ENCODE measurements at regions of chr1 and their contacts with region 1.

Region 1: DNA sequence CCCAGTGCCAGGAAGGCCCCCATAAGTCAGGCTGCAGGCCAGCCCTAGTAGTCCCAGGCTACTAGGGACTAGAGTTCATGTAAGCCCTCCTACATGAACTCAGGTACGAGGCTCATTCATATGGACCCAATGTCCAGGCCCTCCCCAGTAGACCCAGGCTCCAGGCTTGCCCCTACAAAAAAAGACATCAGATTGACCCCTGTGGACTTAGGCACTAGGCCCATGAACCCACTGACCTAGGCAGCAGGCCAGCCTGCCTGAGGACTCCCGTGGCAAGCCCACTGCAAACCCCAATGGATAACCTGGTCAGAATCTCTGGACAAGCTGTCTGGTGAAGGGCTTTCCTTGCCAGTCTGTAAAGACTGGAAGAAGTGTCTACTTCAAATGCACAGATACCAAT is 51.2 kb downstream of the TNNI3K start:
- DNase-seq: no peak
- H3K4me3 ChIP-seq: no peak overlapping the region
- H3K27ac ChIP-seq: no peak overlapping the region
- H3K4me1 ChIP-seq: no peaks in the 10 kb centered on the region
- H3K27me3 ChIP-seq: no peaks in the 10 kb centered on the region
- CTCF ChIP-seq: no peak
- EP300 ChIP-seq: no peak
- POLR2A ChIP-seq: no peak

Region 2: GRCh38 chr1:74222709-74223108 is 63.7 kb before region 1 on chr1:
- intact Hi-C with region 1: no loop called
- DNase-seq: no peak
- H3K4me3 ChIP-seq: no peak overlapping the region
- H3K27ac ChIP-seq: no peak overlapping the region
- H3K4me1 ChIP-seq: no peaks in the 10 kb centered on the region
- H3K27me3 ChIP-seq: no peaks in the 10 kb centered on the region
- CTCF ChIP-seq: no peak
- EP300 ChIP-seq: no peak
- POLR2A ChIP-seq: no peak

Region 3: GRCh38 chr1:74323937-74324473 is 37.6 kb after region 1 on chr1:
- intact Hi-C with region 1: no loop called
- DNase-seq: no peak
- H3K4me3 ChIP-seq: no peak overlapping the region
- H3K27ac ChIP-seq: no peak overlapping the region
- H3K4me1 ChIP-seq: no peaks in the 10 kb centered on the region
- H3K27me3 ChIP-seq: no peaks in the 10 kb centered on the region
- CTCF ChIP-seq: no peak
- EP300 ChIP-seq: no peak
- POLR2A ChIP-seq: no peak

Region 4: DNA sequence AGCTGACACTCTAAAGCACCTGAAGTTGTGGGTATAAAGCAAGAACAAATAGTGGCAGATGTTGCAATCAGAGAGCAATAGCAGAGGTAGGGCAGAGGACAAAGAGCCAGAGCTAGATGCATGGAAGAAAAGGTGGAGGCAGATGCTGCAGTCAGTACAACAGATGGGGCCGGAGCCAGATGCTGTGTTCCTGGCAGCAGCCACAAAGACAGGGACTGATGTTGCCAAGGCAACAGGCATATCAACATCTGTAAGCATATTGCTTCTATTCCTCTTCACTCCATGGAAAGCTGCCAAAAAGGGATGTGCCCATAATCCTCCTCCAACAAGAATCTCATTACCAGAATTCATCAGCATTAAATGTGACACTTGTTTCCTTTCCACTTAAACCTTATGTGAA is 56.8 kb after region 1 on chr1:
- intact Hi-C with region 1: loop called in 1 of 4 experiments (anchors 2 kb)
- DNase-seq: no peak
- H3K4me3 ChIP-seq: no peak overlapping the region
- H3K27ac ChIP-seq: no peak overlapping the region
- H3K4me1 ChIP-seq: peaks cover 1% of the 10 kb centered on the region
- H3K27me3 ChIP-seq: no peaks in the 10 kb centered on the region
- CTCF ChIP-seq: no peak
- EP300 ChIP-seq: no peak
- POLR2A ChIP-seq: no peak

Measured in ovary (tissue), 10 donors.